Tibial artery (tissue), 4 donors: ENCODE measurements at regions of chr5 and their contacts with region 1.

Region 1: DNA sequence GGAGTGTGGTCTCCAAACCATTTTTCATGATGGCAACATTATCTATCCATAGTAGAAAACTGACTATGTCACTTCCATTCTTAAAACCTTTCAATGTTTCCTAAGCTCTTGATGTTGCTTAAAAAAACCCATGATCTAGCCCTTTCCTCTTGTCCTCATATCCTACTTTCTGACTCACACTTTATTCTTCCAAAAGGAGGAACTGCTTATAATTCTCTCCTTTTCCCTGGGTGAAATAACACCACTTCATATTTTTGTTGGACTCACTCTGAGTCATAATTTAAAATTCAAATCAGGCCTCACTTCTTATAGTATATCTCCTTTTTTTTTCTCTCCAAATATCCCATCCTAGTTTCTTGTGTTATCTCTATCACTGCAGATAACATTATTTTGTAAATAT is 513.9 kb downstream of the MAN2A1 start:
- DNase-seq: no peak
- H3K4me3 ChIP-seq: no peak overlapping the region
- H3K27ac ChIP-seq: no peak overlapping the region
- H3K4me1 ChIP-seq: no peaks in the 10 kb centered on the region
- H3K27me3 ChIP-seq: no peaks in the 10 kb centered on the region
- CTCF ChIP-seq: no peak

Region 2: GRCh38 chr5:110218981-110219380 is 15.3 kb after region 1 on chr5:
- intact Hi-C with region 1: no loop called
- DNase-seq: no peak
- H3K4me3 ChIP-seq: no peak overlapping the region
- H3K27ac ChIP-seq: no peak overlapping the region
- H3K4me1 ChIP-seq: no peaks in the 10 kb centered on the region
- H3K27me3 ChIP-seq: no peaks in the 10 kb centered on the region
- CTCF ChIP-seq: no peak

Region 3: DNA sequence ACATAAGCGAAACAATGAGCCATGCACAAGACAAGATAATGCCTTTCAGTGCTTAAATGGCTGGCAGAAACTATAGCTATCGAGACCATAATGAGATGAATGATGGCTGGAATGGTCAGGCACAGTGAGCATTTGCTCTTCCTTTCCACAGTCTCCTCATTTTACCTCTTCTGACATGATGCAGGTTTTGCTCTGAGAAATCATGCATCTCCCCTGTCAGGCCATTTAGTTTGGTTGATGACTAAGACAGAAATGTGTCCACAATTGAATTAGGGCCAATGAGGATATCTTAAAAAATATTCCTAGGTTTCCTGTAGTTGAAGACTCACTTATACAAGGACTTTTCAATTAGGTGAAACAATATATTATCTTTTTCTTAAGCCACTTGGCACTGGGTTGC is 47.7 kb after region 1 on chr5:
- intact Hi-C with region 1: no loop called
- DNase-seq: no peak
- H3K4me3 ChIP-seq: no peak overlapping the region
- H3K27ac ChIP-seq: no peak overlapping the region
- H3K4me1 ChIP-seq: peaks cover 0 to 5% (median 0%) of the 10 kb centered on the region in 4 donors
- H3K27me3 ChIP-seq: no peaks in the 10 kb centered on the region
- CTCF ChIP-seq: no peak

Region 4: DNA sequence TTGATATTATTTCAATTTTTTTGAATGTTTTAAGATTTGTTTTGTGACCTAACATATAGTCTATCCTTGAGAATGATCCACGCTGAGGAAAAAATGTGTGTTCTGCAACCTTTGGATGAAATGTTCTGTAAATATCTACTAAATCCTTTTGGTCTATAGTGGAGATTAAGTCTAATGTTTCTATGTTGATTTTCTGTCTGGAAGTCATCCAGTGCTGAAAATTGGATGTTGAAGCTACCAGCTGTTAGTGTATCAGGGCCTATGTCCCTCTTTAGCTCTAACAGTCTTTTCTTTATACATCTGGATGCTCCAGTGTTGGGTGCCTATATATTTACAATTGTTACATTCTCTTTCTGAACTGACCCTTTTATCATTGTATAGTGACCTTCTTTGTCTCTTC is 100.5 kb after region 1 on chr5:
- intact Hi-C with region 1: loop called (anchors 10 kb)
- DNase-seq: no peak
- H3K4me3 ChIP-seq: no peak overlapping the region
- H3K27ac ChIP-seq: no peak overlapping the region
- H3K4me1 ChIP-seq: no peaks in the 10 kb centered on the region
- H3K27me3 ChIP-seq: no peaks in the 10 kb centered on the region
- CTCF ChIP-seq: no peak